ENCODE measurements at regions of chr6 and their contacts with region 1.

Region 1: GRCh38 chr6:37499433-37500293 is at the start of gene CCDC167:
- DNase-seq: peak; percentile 97
- H3K4me3 ChIP-seq: peak within 1 kb of the TSS; percentile 62 to 81 (median 72)
- H3K27ac ChIP-seq: peak within 1 kb of the TSS; percentile 74
- H3K4me1 ChIP-seq: peaks cover 7% of the 10 kb centered on the region
- H3K27me3 ChIP-seq: no peaks in the 10 kb centered on the region
- CTCF ChIP-seq: no peak
- total RNA-seq, gene CCDC167: 13.2 to 13.3 TPM

Region 2: GRCh38 chr6:37538107-37538506 is 38.4 kb after region 1 on chr6:
- CTCF ChIA-PET with region 1: interaction called, 13 read pairs
- dilution Hi-C with region 1: no loop called
- in situ Hi-C with region 1: no loop called
- intact Hi-C with region 1: no loop called
- DNase-seq: peak; percentile 35
- H3K4me3 ChIP-seq: no peak overlapping the region
- H3K27ac ChIP-seq: no peak overlapping the region
- H3K4me1 ChIP-seq: peaks cover 8% of the 10 kb centered on the region
- H3K27me3 ChIP-seq: peaks cover 4% of the 10 kb centered on the region
- CTCF ChIP-seq: peak; percentile 52 to 82

Measured in mammary epithelial cell (primary cell).